T-cell (primary cell): ENCODE measurements at regions of chr14 and their contacts with region 1.

Region 1: GRCh38 chr14:58427281-58428117 is at the starts of genes KIAA0586 and TIMM9:
- DNase-seq: peak; percentile 84 to 98 (median 96)
- ATAC-seq: peak; percentile 93 to 94 (median 94)
- H3K4me3 ChIP-seq: peak within 1 kb of the TSS; percentile 81 to 97
- H3K4me3 Mint-ChIP-seq: peak within 1 kb of the TSS; percentile 80 to 95 (median 93)
- H3K27ac ChIP-seq: peak within 1 kb of the TSS; percentile 94
- H3K27ac Mint-ChIP-seq: peak within 1 kb of the TSS; percentile 97 to 99
- H3K4me1 ChIP-seq: peaks cover 12 to 14% of the 10 kb centered on the region in 2 experiments
- H3K4me1 Mint-ChIP-seq: peaks cover 47 to 54% (median 50%) of the 10 kb centered on the region in 3 donors
- H3K27me3 ChIP-seq: no peaks in the 10 kb centered on the region
- H3K27me3 Mint-ChIP-seq: no peaks in the 10 kb centered on the region
- total RNA-seq, gene KIAA0586: 32.5 to 37.8 (median 33.7) TPM
- total RNA-seq, gene TIMM9: 23.4 to 37.4 (median 29.1) TPM

Region 2: GRCh38 chr14:58367296-58367695 is 60.2 kb before region 1 on chr14:
- CTCF ChIA-PET with region 1: no interaction called
- POLR2A ChIA-PET with region 1: no interaction called
- DNase-seq: no peak
- ATAC-seq: no peak
- H3K4me3 ChIP-seq: no peak overlapping the region
- H3K4me3 Mint-ChIP-seq: no peak overlapping the region
- H3K27ac ChIP-seq: no peak overlapping the region
- H3K27ac Mint-ChIP-seq: no peak overlapping the region
- H3K4me1 ChIP-seq: no peaks in the 10 kb centered on the region
- H3K4me1 Mint-ChIP-seq: no peaks in the 10 kb centered on the region
- H3K27me3 ChIP-seq: no peaks in the 10 kb centered on the region
- H3K27me3 Mint-ChIP-seq: no peaks in the 10 kb centered on the region

Region 3: GRCh38 chr14:58395812-58396788 is 31.4 kb before region 1 on chr14 and contains the start of gene TOMM20L:
- CTCF ChIA-PET with region 1: interaction called, 6 to 7 read pairs
- POLR2A ChIA-PET with region 1: interaction called, 3 to 12 read pairs
- DNase-seq: peak; percentile 20 to 85 (median 60)
- ATAC-seq: peak; percentile 85 to 90 (median 87)
- H3K4me3 ChIP-seq: peak within 1 kb of the TSS; percentile 59 to 60
- H3K4me3 Mint-ChIP-seq: peak within 1 kb of the TSS; percentile 77 to 83 (median 81)
- H3K27ac ChIP-seq: peak within 1 kb of the TSS; percentile 82
- H3K27ac Mint-ChIP-seq: peak within 1 kb of the TSS; percentile 90 to 96
- H3K4me1 ChIP-seq: peaks cover 2 to 13% of the 10 kb centered on the region in 2 experiments
- H3K4me1 Mint-ChIP-seq: peaks cover 11 to 16% (median 16%) of the 10 kb centered on the region in 3 donors
- H3K27me3 ChIP-seq: no peaks in the 10 kb centered on the region
- H3K27me3 Mint-ChIP-seq: no peaks in the 10 kb centered on the region
- total RNA-seq, gene TOMM20L: 0.73 TPM in 1 of 5 donors, not detected in the others